Dendritic cell treated with granulocyte-macrophage colony-stimulating factor and Interleukin-4, amounts not matched to agents 40 ng/mL and 50 ng/mL, for 4 days (primary cell): ENCODE measurements at regions of chr17 and their contacts with region 1.

Region 1: DNA sequence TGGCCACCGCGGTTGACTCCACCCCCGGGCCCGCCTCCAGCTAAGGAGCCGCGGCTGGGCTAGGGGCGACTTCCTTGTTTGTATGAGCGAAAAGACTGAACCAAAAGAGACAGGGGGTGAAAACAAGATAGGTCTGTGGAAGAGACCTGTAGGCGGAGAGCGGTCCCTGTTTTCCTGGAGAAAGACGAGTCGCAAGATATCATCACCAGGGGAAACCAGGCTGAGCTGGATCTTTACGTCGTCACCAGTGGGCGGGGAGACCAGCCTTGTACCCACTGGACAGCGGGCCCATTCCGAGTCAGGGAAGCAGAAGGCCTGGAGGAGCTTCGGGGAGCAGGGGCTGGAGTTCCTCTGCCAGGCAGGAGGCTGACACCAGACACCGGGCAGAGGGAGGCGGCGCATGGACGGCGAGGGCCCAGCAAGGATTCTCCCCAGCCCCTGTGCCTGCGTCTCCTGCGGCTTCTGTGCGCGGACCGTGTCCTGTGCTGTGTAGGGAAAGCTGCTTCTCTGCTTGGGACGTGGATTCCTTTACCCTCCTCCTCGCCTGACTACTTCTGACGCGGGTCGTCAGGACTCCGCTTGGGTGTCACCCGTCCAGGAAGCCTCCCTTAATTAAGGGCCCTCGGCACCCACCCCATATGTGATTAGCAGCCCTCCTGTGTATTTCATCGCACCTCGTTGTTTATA is 10.3 kb upstream of the ARL4D start:
- H3K4me3 Mint-ChIP-seq: peak overlapping the region; percentile 95
- H3K27ac Mint-ChIP-seq: peak overlapping the region; percentile 99
- H3K4me1 Mint-ChIP-seq: peaks cover 51% of the 10 kb centered on the region
- H3K27me3 Mint-ChIP-seq: no peaks in the 10 kb centered on the region

Region 2: DNA sequence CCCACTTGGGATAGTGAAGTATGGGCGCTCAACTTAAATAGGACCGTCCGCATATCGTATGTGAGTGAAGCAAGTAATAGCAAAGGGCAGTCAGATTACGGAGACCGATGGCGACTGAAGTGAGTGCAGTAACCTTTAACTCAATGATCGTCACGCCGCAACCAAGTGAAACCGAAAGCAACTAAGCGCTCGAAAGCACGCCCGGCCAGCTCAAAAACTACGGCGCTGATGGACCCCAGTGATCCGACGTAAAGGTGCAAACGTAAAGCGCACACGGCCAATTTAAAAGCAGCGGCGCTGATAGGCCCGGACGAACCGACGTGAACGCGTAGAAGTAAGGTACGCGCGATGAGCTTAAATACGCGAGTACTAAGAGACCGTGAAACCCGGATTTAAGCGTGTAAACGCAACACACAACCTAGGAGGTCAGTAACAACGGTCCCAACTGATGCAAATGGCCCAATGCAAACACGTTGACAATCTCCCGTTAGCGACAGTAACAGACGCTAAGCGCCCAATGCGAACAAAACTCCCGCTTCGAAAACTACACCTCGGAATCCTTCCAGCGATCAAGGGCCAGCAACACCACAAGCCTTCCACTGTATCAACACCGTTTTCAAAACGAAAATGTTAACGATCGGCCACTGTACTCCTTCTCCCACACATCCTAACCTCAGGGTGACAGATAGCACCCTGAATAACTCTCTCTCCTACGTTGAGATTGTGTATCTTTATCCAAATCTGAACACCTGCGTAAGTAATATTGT is 27.6 kb before region 1 on chr17:
- intact Hi-C with region 1: loop called (anchors 2 kb)
- H3K4me3 Mint-ChIP-seq: peak overlapping the region; percentile 76
- H3K27ac Mint-ChIP-seq: peak overlapping the region; percentile 100
- H3K4me1 Mint-ChIP-seq: peaks cover 50% of the 10 kb centered on the region
- H3K27me3 Mint-ChIP-seq: peaks cover 2% of the 10 kb centered on the region

Region 3: DNA sequence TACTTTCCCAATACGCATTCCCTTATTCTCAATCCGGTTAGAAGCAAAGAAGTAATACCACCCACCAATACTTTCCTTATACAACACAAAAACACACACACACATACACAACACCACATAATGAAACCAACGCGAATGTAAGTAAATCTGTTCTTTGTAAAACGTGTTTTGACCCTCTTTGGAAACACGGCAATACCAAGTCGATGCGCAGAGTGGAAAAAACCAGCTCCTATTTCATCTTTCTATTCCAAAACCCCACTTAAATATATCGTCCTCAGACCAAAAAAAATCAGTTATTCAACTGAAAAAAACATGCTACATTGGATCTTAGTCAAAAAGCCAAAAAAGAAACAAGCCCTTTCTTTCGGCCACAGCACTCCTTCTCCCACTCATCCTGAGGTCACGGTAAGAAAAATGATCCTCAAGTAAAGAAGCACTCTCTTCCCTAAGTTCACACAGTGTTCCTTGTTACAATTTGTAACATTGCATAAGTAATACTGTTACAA is 20.7 kb before region 1 on chr17:
- intact Hi-C with region 1: loop called (anchors 1 kb)
- H3K4me3 Mint-ChIP-seq: peak overlapping the region; percentile 79
- H3K27ac Mint-ChIP-seq: peak overlapping the region; percentile 100
- H3K4me1 Mint-ChIP-seq: peaks cover 64% of the 10 kb centered on the region
- H3K27me3 Mint-ChIP-seq: no peaks in the 10 kb centered on the region

Region 4: DNA sequence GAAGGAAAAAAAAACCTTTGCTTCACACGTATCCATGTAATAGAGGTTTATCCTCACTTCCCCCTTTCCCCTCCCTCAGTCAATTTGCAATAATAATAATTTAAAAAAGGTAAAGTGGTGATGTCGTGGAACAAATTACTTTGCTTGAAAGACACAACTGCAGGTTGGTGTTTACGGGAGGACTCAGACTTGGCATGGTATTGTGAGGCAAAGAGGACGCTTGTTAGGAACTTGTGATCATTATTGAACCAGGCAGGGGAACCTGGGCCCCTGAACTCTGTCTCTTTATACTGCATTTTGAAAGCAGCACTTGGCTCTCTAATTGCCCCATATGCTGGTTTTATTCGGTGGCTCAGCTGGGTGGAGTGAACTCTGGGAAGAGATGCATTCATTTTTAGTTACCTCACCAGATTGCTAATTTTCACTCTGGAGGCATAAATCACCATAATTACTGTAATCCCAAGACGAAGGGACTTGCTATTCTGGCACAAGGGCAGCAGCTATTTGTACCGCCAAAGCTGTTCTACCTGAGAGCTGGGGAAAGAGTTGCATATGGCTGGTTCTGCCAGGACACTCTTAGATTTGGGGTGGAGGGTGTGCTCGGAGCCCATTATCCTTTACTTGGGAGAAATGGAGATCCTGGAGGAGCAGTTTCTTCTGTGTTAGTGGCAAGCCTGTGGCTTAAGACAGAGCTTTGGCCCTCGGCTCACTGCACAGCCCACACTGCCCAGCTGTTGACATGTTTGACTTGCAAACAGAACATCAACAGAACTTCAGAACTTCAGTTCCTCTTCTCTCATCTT is 89.5 kb after region 1 on chr17:
- intact Hi-C with region 1: no loop called
- H3K4me3 Mint-ChIP-seq: no peak overlapping the region
- H3K27ac Mint-ChIP-seq: no peak overlapping the region
- H3K4me1 Mint-ChIP-seq: peaks cover 20% of the 10 kb centered on the region
- H3K27me3 Mint-ChIP-seq: peaks cover 5% of the 10 kb centered on the region